ENCODE measurements at regions of chr18 and their contacts with region 1.

Region 1: GRCh38 chr18:24176727-24177416 is 38.0 kb downstream of the CABYR start:
- DNase-seq: peak in 1 of 2 donors; percentile 42
- H3K4me3 ChIP-seq: no peak overlapping the region
- H3K27ac ChIP-seq: no peak overlapping the region
- H3K4me1 ChIP-seq: peaks cover 0 to 4% (median 0%) of the 10 kb centered on the region in 4 donors
- H3K27me3 ChIP-seq: no peaks in the 10 kb centered on the region
- CTCF ChIP-seq: peak; percentile 55 to 64

Region 2: GRCh38 chr18:23828426-23828825 is 348.4 kb before region 1 on chr18:
- intact Hi-C with region 1: no loop called
- DNase-seq: no peak
- H3K4me3 ChIP-seq: no peak overlapping the region
- H3K27ac ChIP-seq: peak overlapping the region; percentile 76 to 83
- H3K4me1 ChIP-seq: peaks cover 0 to 41% (median 27%) of the 10 kb centered on the region in 4 donors
- H3K27me3 ChIP-seq: no peaks in the 10 kb centered on the region
- CTCF ChIP-seq: no peak

Region 3: GRCh38 chr18:24112874-24113615 is 63.8 kb before region 1 on chr18:
- intact Hi-C with region 1: no loop called
- DNase-seq: no peak
- H3K4me3 ChIP-seq: no peak overlapping the region
- H3K27ac ChIP-seq: no peak overlapping the region
- H3K4me1 ChIP-seq: no peaks in the 10 kb centered on the region
- H3K27me3 ChIP-seq: no peaks in the 10 kb centered on the region
- CTCF ChIP-seq: no peak

Region 4: DNA sequence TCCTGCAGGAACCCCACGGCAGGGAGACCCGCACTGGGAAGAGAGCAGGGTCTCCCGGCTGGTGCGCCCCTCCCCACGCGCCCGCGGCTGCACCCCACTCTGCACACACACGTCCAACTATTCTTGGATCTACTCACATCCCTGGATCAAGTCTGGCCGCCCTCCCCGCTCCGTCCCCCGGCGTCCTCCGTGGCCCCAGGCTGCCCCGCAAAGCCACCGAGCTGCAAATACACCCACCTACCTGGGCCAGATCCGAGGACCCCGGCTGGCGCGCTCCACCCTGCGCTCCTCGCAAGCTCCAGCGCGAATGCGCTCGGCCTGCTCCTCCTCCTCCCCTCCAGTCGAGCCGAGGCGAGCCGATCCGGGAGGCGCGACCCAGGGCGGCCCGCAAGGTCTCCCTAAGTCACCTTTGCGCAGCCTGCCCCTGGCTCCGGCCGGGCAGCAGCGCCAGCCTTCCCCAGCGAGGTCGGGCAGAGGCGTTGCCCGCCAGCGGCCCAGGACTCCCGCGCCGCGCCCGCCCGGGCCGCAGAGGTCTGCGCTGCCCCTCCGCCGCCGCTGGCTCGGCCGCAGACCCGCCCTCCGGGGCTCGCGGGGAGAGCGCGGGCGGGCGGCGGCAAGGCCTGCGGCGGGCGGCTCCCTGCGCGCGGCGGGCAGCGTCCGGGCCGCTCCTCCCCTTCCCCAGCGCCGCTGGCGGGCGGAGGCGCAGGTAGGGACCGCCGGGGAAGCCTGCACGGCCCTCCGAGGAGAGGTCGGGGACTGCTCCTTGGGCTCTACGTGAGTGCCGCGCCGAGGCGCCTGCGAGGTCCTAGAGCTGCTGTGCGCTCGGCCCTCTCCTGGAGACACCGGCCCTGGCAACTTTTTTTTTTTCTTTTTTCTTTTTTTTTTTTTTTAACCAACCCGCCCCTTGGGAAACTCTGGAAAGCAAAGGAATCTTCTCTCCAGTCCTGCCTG is 94.8 kb after region 1 on chr18:
- intact Hi-C with region 1: loop called (anchors 5 kb)
- DNase-seq: peak; percentile 67 to 88
- H3K4me3 ChIP-seq: peak overlapping the region; percentile 87 to 90
- H3K27ac ChIP-seq: peak overlapping the region; percentile 85 to 88
- H3K4me1 ChIP-seq: peaks cover 0 to 40% (median 20%) of the 10 kb centered on the region in 4 donors
- H3K27me3 ChIP-seq: no peaks in the 10 kb centered on the region
- CTCF ChIP-seq: peak; percentile 10

Region 5: DNA sequence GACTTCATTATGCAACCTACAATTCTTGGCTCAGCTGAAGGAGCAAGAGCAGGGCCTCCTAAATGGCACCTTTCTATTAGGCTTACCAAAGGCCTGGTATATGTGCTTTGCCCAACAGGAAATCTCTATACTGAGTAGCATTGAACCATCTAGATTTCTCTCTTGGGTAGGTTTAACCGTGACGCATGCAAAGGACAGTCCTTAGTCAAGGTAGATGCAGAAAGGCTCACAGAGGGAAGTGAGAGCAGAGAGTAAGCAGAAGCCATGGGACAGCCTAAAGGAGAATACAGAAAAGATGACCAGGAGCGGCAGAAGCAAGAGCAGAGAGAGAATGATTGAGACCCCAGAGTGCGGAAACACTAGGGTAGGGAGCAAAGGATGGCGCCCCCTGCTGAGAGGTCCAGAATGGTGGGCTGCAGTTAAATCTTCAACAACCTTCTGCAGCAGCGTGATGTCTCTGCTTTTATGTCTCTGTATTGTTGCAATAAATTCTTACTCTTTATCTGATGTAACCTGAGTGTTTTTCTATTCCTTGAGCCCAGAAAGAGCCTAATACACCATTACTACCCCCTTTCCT is 225.4 kb after region 1 on chr18:
- intact Hi-C with region 1: no loop called
- DNase-seq: no peak
- H3K4me3 ChIP-seq: no peak overlapping the region
- H3K27ac ChIP-seq: no peak overlapping the region
- H3K4me1 ChIP-seq: peaks cover 0 to 14% (median 6%) of the 10 kb centered on the region in 4 donors
- H3K27me3 ChIP-seq: no peaks in the 10 kb centered on the region
- CTCF ChIP-seq: no peak

Region 6: DNA sequence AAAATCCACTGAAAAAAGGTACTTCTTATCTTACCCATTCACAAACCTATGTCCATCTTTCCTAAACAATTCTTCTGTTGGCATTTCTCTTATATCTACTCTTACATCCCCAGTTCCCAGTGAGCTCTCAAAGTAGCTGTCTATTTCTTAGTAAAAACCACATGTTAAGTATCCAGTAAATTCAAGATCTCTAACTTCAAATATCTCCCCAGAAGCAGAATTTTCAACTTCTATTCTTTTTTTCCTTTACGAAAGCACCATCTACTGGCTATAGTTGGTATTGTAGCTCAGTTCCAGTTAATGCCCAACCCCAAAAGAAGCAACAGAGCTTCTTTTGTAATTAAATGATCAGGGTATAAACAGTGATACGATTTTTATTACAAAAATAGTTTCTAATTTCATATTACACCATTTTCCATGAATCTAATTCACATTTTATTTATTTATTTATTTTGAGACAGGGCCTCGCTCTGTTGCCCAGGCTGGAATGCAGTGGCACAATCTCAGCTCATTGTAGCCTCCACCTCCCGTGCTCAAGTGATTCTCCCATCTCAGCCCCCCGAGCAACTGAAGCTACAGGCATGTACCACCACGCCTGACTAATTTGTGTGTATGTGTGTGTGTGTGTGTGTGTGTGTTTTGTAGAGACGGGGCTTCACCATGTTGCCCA is 312.1 kb after region 1 on chr18:
- intact Hi-C with region 1: loop called (anchors 10 kb)
- DNase-seq: no peak
- H3K4me3 ChIP-seq: no peak overlapping the region
- H3K27ac ChIP-seq: no peak overlapping the region
- H3K4me1 ChIP-seq: peaks cover 0 to 5% (median 0%) of the 10 kb centered on the region in 4 donors
- H3K27me3 ChIP-seq: peaks cover 0 to 3% of the 10 kb centered on the region in 2 donors
- CTCF ChIP-seq: peak; percentile 66 to 80